Activated CD4-positive, alpha-beta T cell treated with anti-CD3 and anti-CD28 coated beads for 36 hours (primary cell): ENCODE measurements at regions of chr3 and their contacts with region 1.

Region 1: DNA sequence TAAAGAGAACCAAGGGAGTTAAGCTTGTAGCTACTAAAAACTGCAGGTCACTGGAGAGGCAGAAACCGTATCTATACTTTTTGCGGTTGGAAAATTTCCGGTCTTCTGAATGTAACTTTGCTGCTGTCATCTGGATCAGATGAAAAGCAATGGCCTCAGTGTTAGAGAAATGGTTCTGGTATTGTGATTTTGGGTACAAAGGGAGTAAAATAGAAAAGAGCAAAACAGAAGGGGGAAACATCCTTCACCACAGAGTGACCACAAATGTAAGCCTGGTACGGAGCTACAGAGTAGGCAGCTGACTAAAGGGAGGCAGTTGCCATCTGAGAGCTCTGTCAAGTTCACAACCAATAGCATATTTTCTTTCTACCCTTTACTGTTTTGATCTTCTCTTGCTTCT is 5.6 kb downstream of the CD96 start:
- DNase-seq: peak; percentile 75
- ATAC-seq: peak; percentile 70
- H3K4me3 Mint-ChIP-seq: no peak overlapping the region
- H3K27ac Mint-ChIP-seq: no peak overlapping the region
- H3K4me1 Mint-ChIP-seq: peaks cover 35% of the 10 kb centered on the region
- H3K27me3 Mint-ChIP-seq: no peaks in the 10 kb centered on the region

Region 2: DNA sequence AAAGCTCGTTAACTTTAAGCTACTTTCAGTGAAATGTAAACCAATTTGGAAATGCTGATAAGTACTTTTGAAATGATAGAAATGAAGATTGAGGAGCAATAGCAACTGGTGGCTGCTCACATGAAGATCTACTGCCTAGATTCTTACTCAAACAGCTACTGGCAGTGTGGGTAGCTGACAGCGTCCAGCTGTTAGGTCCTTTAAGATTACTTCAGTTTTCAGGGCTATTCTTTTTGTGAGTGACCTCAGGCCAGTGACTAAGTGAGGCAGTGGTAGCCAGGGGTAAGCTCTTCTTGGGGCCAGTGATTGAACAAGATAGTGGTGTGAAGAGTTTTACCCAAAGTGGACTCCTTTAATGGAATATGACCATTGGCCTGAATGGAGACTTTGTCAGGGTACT is 434.7 kb before region 1 on chr3:
- CTCF ChIA-PET with region 1: no interaction called
- POLR2A ChIA-PET with region 1: no interaction called
- intact Hi-C with region 1: no loop called
- DNase-seq: no peak
- ATAC-seq: no peak
- H3K4me3 Mint-ChIP-seq: no peak overlapping the region
- H3K27ac Mint-ChIP-seq: no peak overlapping the region
- H3K4me1 Mint-ChIP-seq: no peaks in the 10 kb centered on the region
- H3K27me3 Mint-ChIP-seq: no peaks in the 10 kb centered on the region

Region 3: DNA sequence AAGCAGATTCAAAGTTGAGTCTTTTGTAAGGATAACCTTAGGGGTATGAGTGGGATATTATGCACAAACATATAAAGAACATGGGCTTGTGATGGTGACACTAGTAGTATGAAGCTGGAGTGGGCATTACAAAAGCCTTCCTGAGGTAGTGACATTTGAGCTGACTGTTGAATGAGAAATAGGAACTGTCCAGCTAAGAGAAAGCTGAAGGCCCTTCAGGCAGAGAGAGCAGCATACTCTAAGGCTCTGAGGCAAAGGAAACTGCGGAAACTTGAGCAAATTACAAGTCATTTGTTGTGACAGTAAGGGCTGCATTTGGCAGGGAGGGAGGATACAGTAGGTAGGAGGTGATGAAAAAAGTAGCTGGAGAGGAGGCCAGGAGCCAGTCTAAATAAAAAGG is 196.3 kb before region 1 on chr3:
- CTCF ChIA-PET with region 1: no interaction called
- POLR2A ChIA-PET with region 1: no interaction called
- intact Hi-C with region 1: no loop called
- DNase-seq: no peak
- ATAC-seq: no peak
- H3K4me3 Mint-ChIP-seq: no peak overlapping the region
- H3K27ac Mint-ChIP-seq: no peak overlapping the region
- H3K4me1 Mint-ChIP-seq: no peaks in the 10 kb centered on the region
- H3K27me3 Mint-ChIP-seq: peaks cover 2% of the 10 kb centered on the region

Region 4: GRCh38 chr3:111571907-111572460 is 24.4 kb after region 1 on chr3:
- CTCF ChIA-PET with region 1: interaction called, 4 read pairs
- POLR2A ChIA-PET with region 1: no interaction called
- intact Hi-C with region 1: loop called in 1 of 2 experiments (anchors 2 kb)
- DNase-seq: peak; percentile 69
- ATAC-seq: peak; percentile 97
- H3K4me3 Mint-ChIP-seq: peak overlapping the region; percentile 27
- H3K27ac Mint-ChIP-seq: peak overlapping the region; percentile 84
- H3K4me1 Mint-ChIP-seq: peaks cover 62% of the 10 kb centered on the region
- H3K27me3 Mint-ChIP-seq: no peaks in the 10 kb centered on the region

Region 5: GRCh38 chr3:111594205-111594604 is 46.6 kb after region 1 on chr3:
- CTCF ChIA-PET with region 1: interaction called, 4 read pairs
- POLR2A ChIA-PET with region 1: no interaction called
- intact Hi-C with region 1: loop called (anchors 1 to 2 kb)
- DNase-seq: no peak
- ATAC-seq: no peak
- H3K4me3 Mint-ChIP-seq: peak overlapping the region; percentile 93
- H3K27ac Mint-ChIP-seq: peak overlapping the region; percentile 98
- H3K4me1 Mint-ChIP-seq: peaks cover 59% of the 10 kb centered on the region
- H3K27me3 Mint-ChIP-seq: no peaks in the 10 kb centered on the region

Region 6: DNA sequence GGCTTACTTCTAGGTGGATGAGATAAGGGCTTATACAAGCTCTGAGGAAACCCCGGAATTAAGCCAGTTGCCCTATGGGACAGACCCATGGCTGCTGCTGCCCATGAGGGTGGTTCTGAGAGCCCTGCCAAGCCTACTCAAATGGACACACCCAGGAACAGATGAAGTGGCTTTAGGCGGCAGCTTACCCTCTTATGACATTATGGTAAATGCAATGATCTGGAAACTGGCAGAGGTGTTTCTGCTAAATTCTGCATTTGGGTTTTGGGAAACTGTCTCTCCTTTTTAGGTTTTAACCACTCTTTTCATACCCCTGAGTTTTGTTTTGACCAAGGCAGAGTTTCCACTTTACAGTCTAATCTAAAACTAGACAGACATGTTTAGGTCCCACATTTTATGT is 56.5 kb after region 1 on chr3:
- CTCF ChIA-PET with region 1: interaction called, 7 read pairs
- POLR2A ChIA-PET with region 1: interaction called, 5 read pairs
- intact Hi-C with region 1: loop called (anchors 1 kb)
- DNase-seq: peak; percentile 67
- ATAC-seq: peak; percentile 64
- H3K4me3 Mint-ChIP-seq: peak overlapping the region; percentile 44
- H3K27ac Mint-ChIP-seq: peak overlapping the region; percentile 97
- H3K4me1 Mint-ChIP-seq: peaks cover 88% of the 10 kb centered on the region
- H3K27me3 Mint-ChIP-seq: no peaks in the 10 kb centered on the region

Region 7: GRCh38 chr3:111610189-111610588 is 62.6 kb after region 1 on chr3:
- CTCF ChIA-PET with region 1: interaction called, 7 read pairs
- POLR2A ChIA-PET with region 1: interaction called, 12 read pairs
- intact Hi-C with region 1: loop called in 1 of 2 experiments (anchors 1 kb)
- DNase-seq: peak; percentile 53
- ATAC-seq: peak; percentile 56
- H3K4me3 Mint-ChIP-seq: peak overlapping the region; percentile 62
- H3K27ac Mint-ChIP-seq: peak overlapping the region; percentile 98
- H3K4me1 Mint-ChIP-seq: peaks cover 98% of the 10 kb centered on the region
- H3K27me3 Mint-ChIP-seq: no peaks in the 10 kb centered on the region

Region 8: DNA sequence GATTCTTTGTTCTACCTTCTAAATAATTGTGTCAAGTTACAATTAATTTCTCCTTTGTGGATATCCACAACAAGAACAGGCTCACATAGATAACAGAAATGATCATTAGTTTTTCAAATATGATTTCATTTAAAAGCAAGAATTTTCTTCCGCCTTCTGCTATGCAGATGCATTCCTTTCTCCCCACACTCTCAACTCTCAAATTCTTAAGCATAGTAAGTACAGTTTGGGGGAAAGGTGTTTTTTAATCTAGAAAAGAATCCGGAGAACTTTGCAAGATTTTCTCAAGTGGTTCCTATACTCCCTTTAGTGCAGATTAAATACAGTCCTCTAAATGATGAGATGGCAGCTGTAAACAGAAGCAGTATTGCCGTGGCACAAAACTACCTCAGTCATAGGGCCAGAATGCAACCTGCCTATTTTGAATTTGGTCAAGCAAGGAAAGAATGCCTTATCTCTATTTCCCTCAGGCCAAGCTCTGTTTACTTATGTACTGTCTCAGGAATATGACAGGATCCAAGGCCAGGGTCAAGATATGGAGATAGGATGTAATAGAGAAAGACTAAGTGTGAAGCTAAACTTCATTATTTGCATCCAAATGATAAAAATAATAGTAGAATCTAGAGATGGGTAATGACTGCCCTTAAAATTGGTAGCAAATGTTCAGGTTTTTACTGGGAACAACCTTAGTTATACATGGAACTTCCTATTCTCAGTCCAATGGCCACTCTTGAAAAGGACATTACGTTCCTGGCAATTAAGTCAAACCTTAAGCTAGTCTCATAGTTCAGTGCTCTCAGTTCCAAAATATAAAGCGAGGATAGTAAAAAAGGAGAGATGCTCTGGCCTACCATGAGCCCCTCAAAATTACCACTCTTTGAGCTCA is 234.2 kb after region 1 on chr3:
- CTCF ChIA-PET with region 1: no interaction called
- POLR2A ChIA-PET with region 1: no interaction called
- intact Hi-C with region 1: no loop called
- DNase-seq: no peak
- ATAC-seq: no peak
- H3K4me3 Mint-ChIP-seq: no peak overlapping the region
- H3K27ac Mint-ChIP-seq: no peak overlapping the region
- H3K4me1 Mint-ChIP-seq: no peaks in the 10 kb centered on the region
- H3K27me3 Mint-ChIP-seq: no peaks in the 10 kb centered on the region